Breast epithelium (tissue), 4 donors: ENCODE measurements at regions of chr10 and their contacts with region 1.

Region 1: GRCh38 chr10:28160866-28161405 is 141.9 kb downstream of the MPP7 start:
- DNase-seq: no peak
- H3K4me3 ChIP-seq: no peak overlapping the region
- H3K27ac ChIP-seq: no peak overlapping the region
- H3K4me1 ChIP-seq: no peaks in the 10 kb centered on the region
- H3K27me3 ChIP-seq: no peaks in the 10 kb centered on the region
- CTCF ChIP-seq: no peak
- POLR2A ChIP-seq: no peak

Region 2: DNA sequence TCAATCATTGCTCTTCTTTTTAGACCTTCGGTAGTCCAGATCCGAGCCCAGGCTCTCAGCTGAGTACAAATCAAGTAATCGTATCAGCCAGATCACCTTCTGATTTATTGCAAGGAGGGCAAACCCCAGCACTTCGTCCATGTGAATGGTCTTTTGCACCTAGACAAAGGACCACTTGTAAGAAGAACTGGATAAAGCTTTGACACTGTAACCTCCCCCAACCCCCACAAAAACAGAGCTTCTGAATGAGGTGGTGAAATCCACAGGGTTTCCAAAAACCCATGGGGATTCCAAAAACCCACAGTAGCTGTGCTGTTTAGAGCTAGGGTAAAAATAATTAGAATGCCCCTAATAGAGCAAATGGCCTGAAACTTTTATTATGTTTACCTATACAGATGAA is 13.2 kb before region 1 on chr10:
- intact Hi-C with region 1: no loop called
- DNase-seq: no peak
- H3K4me3 ChIP-seq: no peak overlapping the region
- H3K27ac ChIP-seq: no peak overlapping the region
- H3K4me1 ChIP-seq: no peaks in the 10 kb centered on the region
- H3K27me3 ChIP-seq: no peaks in the 10 kb centered on the region
- CTCF ChIP-seq: no peak
- POLR2A ChIP-seq: no peak

Region 3: GRCh38 chr10:28201410-28202400 is 40.8 kb after region 1 on chr10:
- intact Hi-C with region 1: loop called (anchors 2 kb)
- DNase-seq: no peak
- H3K4me3 ChIP-seq: no peak overlapping the region
- H3K27ac ChIP-seq: no peak overlapping the region
- H3K4me1 ChIP-seq: no peaks in the 10 kb centered on the region
- H3K27me3 ChIP-seq: no peaks in the 10 kb centered on the region
- CTCF ChIP-seq: no peak
- POLR2A ChIP-seq: no peak